AG04449 (cell line): ENCODE measurements at regions of chr4 and their contacts with region 1.

Region 1: GRCh38 chr4:87390891-87391575 is at the start of gene HSD17B11:
- DNase-seq: peak; percentile 54
- H3K4me3 ChIP-seq: peak within 1 kb of the TSS; percentile 59
- CTCF ChIP-seq: no peak

Region 2: GRCh38 chr4:87422104-87423052 is 31.3 kb after region 1 on chr4 and contains the start of gene NUDT9:
- CTCF ChIA-PET with region 1: interaction called, 3 read pairs
- POLR2A ChIA-PET with region 1: interaction called, 16 read pairs
- DNase-seq: peak; percentile 60
- H3K4me3 ChIP-seq: peak within 1 kb of the TSS; percentile 96
- CTCF ChIP-seq: no peak

Region 3: DNA sequence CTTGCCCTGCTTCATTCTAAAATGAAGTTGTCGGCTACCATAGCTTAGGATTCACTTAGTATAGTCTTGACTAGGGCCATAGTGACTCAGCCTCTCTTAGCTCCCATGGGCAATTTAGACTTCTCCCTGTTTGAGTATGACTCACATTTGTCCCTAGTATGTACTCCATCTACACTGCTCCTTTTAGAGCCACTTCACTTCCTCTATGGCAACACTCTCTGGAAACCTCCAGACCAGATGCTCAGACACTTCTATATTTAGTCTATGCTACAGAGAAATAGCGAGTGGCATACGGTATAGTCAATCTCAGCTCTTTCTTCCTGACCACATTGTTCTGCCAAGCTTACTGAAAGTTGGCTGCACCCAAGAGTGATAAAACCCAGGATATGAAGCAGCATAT is 452.9 kb after region 1 on chr4:
- CTCF ChIA-PET with region 1: no interaction called
- POLR2A ChIA-PET with region 1: no interaction called
- DNase-seq: peak; percentile 63
- H3K4me3 ChIP-seq: no peak overlapping the region
- CTCF ChIP-seq: no peak